ENCODE measurements at regions of chr14 and their contacts with region 1.

Region 1: GRCh38 chr14:53539489-53540126 is 386.5 kb upstream of the DDHD1 start:
- DNase-seq: no peak
- H3K4me3 ChIP-seq: no peak overlapping the region
- H3K27ac ChIP-seq: peak overlapping the region in 2 of 4 donors; percentile 36 to 38
- H3K4me1 ChIP-seq: peaks cover 0 to 28% (median 7%) of the 10 kb centered on the region in 3 donors
- H3K27me3 ChIP-seq: no peaks in the 10 kb centered on the region
- CTCF ChIP-seq: peak; percentile 71 to 90 (median 85)
- POLR2A ChIP-seq: no peak

Region 2: DNA sequence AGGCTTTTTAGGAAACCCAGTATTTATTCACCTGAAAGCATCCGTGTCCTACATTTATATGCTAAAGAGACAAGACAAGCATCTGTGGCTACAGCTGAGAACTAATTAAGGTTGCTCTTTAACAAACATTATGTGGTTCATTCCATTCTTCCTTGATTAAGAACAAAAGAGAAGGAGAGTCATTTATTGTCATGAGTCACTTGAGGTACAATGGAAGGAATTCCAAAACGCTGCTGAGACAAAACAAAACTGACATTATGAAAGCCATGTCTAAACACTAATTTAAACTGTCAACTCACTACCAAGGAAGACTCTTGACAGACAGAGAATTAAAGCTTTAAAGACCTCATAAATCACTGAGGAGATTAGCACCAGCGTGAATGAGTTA is 202.6 kb after region 1 on chr14:
- intact Hi-C with region 1: no loop called
- DNase-seq: no peak
- H3K4me3 ChIP-seq: no peak overlapping the region
- H3K27ac ChIP-seq: no peak overlapping the region
- H3K4me1 ChIP-seq: no peaks in the 10 kb centered on the region
- H3K27me3 ChIP-seq: no peaks in the 10 kb centered on the region
- CTCF ChIP-seq: no peak
- POLR2A ChIP-seq: no peak

Region 3: GRCh38 chr14:54175298-54175942 is 635.8 kb after region 1 on chr14:
- intact Hi-C with region 1: loop called (anchors 10 kb)
- DNase-seq: no peak
- H3K4me3 ChIP-seq: no peak overlapping the region
- H3K27ac ChIP-seq: no peak overlapping the region
- H3K4me1 ChIP-seq: peaks cover 0 to 50% (median 7%) of the 10 kb centered on the region in 3 donors
- H3K27me3 ChIP-seq: peaks cover 0 to 14% (median 0%) of the 10 kb centered on the region in 4 donors
- CTCF ChIP-seq: peak; percentile 65 to 89 (median 83)
- POLR2A ChIP-seq: no peak

Region 4: DNA sequence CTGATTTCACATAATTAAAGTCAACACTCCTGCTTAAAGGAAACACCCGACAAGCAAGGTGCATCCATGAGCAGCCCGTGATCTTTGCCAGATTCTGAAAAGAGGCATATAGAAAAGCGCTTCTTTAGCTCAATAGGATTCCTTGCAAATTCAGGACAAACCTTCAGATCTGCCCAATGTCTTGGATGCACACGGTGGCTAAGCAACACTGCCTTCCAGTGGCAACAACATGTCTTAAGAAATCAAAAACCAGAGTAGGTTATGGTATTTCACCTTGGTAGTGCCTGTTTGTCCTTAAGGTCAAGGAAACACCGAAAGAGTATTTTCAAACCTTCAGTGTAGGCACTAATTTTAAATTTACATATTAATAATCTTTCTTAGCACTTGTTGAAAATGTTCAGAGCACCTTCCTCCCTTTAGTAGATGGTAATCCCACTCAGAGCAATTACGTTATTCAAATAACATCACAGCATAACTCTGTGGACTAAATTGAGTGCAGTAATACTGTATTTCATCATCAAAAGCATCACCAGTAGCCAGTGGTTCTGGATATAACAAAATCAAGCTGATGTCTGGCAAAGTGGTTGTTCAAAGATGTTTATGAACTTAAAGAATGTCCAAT is 799.2 kb after region 1 on chr14:
- intact Hi-C with region 1: loop called (anchors 10 kb)
- DNase-seq: no peak
- H3K4me3 ChIP-seq: no peak overlapping the region
- H3K27ac ChIP-seq: no peak overlapping the region
- H3K4me1 ChIP-seq: no peaks in the 10 kb centered on the region
- H3K27me3 ChIP-seq: peaks cover 0 to 31% (median 0%) of the 10 kb centered on the region in 4 donors
- CTCF ChIP-seq: peak in 4 of 6 experiments; percentile 27 to 53 (median 30)
- POLR2A ChIP-seq: no peak